Esophagus muscularis mucosa (tissue), 4 donors: ENCODE measurements at regions of chr6 and their contacts with region 1.

Region 1: GRCh38 chr6:158793432-158793831 is 25.7 kb downstream of the EZR start:
- DNase-seq: no peak
- H3K4me3 ChIP-seq: no peak overlapping the region
- H3K27ac ChIP-seq: no peak overlapping the region
- H3K4me1 ChIP-seq: peaks cover 32 to 83% (median 37%) of the 10 kb centered on the region in 4 donors
- H3K27me3 ChIP-seq: no peaks in the 10 kb centered on the region
- CTCF ChIP-seq: peak in 1 of 3 experiments; percentile 38
- EP300 ChIP-seq: no peak
- POLR2A ChIP-seq: no peak

Region 2: GRCh38 chr6:158972241-158973233 is 179.1 kb after region 1 on chr6:
- intact Hi-C with region 1: loop called (anchors 5 kb)
- DNase-seq: no peak
- H3K4me3 ChIP-seq: no peak overlapping the region
- H3K27ac ChIP-seq: no peak overlapping the region
- H3K4me1 ChIP-seq: peaks cover 0 to 8% (median 4%) of the 10 kb centered on the region in 4 donors
- H3K27me3 ChIP-seq: no peaks in the 10 kb centered on the region
- CTCF ChIP-seq: peak; percentile 54 to 65 (median 58)
- EP300 ChIP-seq: no peak
- POLR2A ChIP-seq: no peak